Right ventricle myocardium superior (tissue), 1 donor: ENCODE measurements at regions of chr22 and their contacts with region 1.

Region 1: GRCh38 chr22:31970490-31971444 is 26.4 kb downstream of the YWHAH start:
- DNase-seq: peak; percentile 89
- ATAC-seq: peak; percentile 97

Region 2: DNA sequence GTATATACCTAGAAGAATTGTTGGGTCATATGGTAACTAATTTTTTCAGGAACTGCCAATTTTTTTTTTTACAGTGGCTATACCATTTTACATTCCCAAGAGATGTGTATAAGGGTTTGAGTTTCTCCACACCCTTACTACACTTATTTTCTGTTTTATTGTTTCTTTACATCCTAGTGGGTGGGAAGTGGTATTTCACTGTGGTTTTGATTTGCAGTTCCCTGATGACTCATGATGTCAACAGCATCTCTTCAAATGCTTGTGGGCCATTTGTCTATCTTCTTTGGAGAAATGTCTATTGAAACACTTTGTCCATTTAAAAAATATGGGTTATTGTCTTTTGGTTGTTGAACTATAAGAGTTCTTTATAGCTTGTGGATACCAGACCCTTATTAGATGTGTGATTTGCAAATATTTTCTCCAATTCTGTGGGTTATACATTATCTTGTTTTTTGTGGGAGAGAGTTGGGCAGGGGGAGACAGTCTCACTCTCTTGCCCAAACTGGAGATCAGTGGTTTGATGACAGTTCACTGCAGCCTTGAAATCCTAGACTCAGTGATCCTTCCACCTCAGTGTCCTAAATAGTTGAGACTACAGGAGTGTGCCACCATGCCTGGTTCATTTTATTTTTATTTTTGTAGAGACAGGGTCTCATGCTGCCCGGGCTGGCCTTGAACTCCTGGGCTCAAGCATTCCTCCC is 278.4 kb before region 1 on chr22:
- intact Hi-C with region 1: no loop called
- DNase-seq: no peak
- ATAC-seq: no peak

Region 3: DNA sequence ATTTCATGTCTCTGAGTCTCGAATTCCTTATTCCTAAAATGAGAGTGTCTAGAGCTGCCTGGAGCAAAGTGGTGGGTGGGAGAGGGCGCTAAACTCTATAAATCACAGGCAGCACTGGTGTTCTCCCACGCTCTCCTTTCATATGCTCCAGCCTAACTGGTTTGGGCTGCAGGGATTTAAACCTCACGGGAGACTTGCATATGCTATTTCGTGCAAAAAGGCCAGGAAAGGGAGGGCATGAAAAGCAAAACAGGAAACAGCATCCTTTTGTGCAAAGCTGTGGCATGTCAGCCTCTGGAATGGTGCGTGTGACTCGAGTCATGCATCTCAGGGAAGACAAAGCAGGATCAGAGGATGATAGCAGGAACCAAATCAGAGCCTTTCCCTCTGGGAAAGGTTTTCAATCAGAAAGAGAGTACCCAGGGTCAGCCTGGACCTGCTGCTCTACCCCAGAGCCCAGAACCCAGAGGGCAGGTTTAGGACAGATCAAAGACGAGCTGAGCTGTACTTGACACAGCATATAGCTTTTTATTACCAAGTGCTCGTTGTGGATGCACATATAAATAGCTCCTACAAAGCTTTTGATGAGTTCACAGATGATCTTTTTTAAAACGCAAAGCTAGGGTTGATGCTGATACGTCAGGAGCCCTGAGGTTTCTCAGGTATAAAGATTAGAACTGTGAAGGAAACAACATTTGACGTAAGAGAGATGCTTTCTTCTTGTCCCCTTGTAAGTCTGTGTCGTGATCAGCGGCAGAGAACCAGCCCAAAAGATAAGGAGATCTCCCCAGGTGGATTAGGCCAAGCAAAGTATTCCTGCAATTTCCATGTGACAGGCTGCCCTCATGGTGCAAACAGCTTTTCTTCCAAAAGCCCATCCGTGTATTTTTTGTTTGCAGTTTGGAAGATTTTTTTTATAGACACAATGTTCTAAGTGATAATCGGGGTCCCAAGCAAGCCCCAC is 72.6 kb before region 1 on chr22:
- intact Hi-C with region 1: no loop called
- DNase-seq: no peak
- ATAC-seq: no peak

Region 4: DNA sequence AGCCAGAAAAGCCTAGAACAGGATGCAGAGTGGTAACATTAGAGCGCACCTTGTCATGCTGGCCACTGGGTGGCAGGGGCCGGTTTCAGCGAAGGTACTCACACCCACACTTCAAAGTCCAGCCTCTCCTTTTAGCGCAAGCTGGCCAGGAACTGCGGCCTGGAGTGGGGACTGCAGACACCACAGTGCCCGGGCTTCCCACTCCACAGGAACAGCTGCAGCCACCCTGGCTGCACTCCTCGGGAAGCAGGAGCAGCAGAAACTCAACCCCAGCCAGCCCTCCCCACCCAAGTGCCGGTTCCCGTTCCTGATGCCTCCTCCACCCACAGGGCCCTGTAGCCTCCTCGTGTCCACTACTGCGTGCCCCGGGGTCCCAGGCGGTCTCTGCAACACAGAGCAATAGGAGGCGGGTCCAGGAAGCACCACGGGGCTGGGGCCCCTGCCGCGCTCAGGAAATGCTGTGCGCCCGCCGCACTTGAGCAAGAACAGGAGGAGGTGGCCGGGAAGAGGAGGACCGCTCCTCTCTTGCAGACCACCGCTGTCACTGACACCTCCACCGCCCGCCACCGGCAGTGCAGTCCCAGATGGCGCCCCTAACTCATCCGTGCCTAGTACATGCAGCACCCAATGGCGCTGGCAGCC is 231.9 kb after region 1 on chr22:
- intact Hi-C with region 1: loop called (anchors 10 kb)
- DNase-seq: peak; percentile 59
- ATAC-seq: peak; percentile 85

Region 5: DNA sequence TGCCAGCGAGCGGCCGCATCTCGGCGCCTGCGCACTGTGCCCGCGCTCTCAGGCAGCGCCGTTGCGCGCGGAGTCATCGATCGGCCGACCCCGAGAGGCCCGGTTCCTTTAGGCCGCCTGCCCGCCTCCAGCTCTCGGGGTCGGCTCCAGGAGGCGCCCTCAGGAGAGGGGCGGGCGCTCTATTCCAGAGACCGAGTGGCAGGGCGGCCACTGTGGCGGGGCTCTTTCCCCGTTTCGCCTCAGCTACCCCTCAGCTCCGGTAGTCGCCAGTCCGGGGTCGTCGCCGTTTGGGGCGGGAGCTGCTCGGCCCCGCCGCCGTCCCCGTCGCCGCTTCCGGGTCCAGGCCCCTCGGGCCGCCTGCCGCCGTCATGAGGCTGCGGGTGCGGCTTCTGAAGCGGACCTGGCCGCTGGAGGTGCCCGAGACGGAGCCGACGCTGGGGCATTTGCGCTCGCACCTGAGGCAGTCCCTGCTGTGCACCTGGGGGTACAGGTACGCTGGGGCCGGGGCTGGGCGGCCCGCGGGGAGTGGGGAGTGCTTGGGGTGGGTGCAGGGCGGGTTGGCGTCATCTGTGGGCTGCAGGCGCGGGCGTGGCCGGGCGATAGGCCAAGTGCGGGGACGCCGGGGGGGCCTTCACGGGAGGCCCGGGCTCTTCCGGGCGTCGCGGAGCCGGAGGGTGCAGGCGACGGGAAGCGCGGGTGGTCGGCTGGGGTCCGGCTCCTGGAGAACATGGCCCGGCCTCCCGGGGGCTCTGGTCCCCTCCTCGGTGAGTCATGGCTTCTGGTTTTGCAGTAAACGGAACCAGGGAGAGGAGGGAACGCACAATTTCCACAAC is 504.1 kb after region 1 on chr22 and contains the start of gene FBXO7:
- intact Hi-C with region 1: loop called (anchors 10 kb)
- DNase-seq: peak; percentile 96
- ATAC-seq: peak; percentile 93
- total RNA-seq, gene FBXO7: 30.3 TPM